T-cell (primary cell): ENCODE measurements at regions of chr2 and their contacts with region 1.

Region 1: DNA sequence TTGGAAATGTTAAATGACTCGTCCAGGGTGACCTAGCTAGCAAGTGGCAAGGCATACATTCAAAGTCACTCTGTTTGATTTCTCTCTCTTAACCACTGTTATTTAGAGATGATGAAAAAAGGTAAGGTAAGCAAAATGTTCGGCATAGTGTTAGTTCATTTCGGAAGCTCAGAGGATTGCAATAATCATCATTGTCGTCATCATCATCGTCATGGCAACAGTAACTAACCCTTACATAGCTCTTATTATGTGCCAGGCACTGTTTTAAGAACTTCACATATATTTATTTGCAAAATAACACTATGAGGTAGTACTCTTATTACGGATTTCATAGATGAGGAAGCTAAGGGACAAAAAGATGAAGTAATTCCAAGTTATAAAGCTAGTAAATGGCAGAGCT is 292.7 kb upstream of the CXCR4 start:
- DNase-seq: no peak
- ATAC-seq: no peak
- H3K4me3 ChIP-seq: no peak overlapping the region
- H3K4me3 Mint-ChIP-seq: no peak overlapping the region
- H3K27ac ChIP-seq: no peak overlapping the region
- H3K27ac Mint-ChIP-seq: no peak overlapping the region
- H3K4me1 ChIP-seq: no peaks in the 10 kb centered on the region
- H3K4me1 Mint-ChIP-seq: no peaks in the 10 kb centered on the region
- H3K27me3 ChIP-seq: peaks cover 0 to 31% of the 10 kb centered on the region in 2 experiments
- H3K27me3 Mint-ChIP-seq: peaks cover 18 to 31% of the 10 kb centered on the region in 2 donors

Region 2: DNA sequence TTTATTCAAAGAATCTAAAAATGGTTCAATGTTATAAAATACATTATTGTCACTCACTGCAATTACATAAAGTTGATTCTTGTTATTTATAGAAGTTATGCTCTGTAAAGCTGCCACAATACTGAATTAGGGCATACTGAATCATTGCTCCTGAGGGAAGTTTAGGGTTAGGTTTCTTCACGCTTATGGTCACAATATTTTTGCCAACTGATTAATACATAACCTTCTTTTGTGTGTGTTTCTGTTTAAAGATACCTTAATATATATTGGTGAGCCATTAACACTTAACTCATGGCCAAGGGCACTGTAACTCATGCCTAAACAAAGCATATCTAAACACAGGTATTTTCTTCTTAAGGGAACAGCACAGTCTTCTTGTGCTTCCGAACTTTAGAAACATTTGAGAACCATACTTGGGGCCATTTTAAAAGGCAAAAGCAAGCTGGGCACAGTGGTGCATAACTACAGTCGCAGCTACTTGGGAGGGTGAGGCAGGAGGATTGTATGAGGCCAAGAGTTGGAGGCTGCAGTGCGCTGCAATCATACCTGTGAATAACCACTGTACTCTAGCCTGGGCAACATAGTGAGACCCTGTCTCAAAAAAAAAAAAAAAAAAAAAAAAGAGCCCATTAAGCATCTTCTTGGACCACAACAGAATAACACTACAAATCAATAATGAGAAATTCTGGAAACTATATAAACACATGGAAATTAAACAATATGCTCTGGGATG is 440.9 kb before region 1 on chr2:
- CTCF ChIA-PET with region 1: no interaction called
- POLR2A ChIA-PET with region 1: interaction called in 1 of 2 experiments, 14 read pairs
- DNase-seq: no peak
- ATAC-seq: no peak
- H3K4me3 ChIP-seq: no peak overlapping the region
- H3K4me3 Mint-ChIP-seq: no peak overlapping the region
- H3K27ac ChIP-seq: no peak overlapping the region
- H3K27ac Mint-ChIP-seq: no peak overlapping the region
- H3K4me1 ChIP-seq: no peaks in the 10 kb centered on the region
- H3K4me1 Mint-ChIP-seq: peaks cover 61 to 64% (median 62%) of the 10 kb centered on the region in 3 donors
- H3K27me3 ChIP-seq: no peaks in the 10 kb centered on the region
- H3K27me3 Mint-ChIP-seq: no peaks in the 10 kb centered on the region